BJ (cell line): ENCODE measurements at regions of chr11 and their contacts with region 1.

Region 1: DNA sequence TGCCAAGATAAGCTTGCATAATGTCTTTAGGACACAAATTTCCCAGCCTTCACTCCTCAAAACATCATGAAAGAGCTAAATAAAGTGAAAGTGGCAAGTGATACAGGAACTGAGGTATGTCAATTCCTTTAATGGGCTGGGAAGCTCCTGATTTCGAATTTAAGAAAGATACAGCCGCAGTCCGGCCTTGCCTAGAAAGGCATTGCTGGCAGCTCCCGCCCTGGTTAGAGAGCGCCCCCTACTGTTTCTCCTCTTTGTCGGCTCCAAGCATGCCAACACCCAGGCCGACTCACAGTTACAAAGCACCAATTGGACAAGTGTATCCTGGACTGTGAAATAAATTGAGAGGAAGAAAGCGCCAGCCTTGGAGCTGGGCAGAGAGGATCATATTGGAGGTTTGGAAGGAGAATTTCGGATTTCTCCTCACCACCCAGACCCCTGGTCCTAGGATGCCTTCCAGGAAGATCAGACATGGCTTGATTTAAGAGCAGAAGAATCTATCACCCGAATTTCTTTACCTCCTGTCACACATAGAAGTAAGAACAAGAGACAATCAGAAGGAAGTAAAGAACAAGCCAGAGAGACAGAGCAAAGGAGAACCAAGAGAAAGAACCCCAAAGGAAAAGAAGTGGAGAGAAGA is 84.0 kb downstream of the FAM76B start:
- DNase-seq: no peak
- H3K4me3 ChIP-seq: no peak overlapping the region
- H3K27me3 ChIP-seq: peaks cover 4% of the 10 kb centered on the region
- CTCF ChIP-seq: peak; percentile 96

Region 2: DNA sequence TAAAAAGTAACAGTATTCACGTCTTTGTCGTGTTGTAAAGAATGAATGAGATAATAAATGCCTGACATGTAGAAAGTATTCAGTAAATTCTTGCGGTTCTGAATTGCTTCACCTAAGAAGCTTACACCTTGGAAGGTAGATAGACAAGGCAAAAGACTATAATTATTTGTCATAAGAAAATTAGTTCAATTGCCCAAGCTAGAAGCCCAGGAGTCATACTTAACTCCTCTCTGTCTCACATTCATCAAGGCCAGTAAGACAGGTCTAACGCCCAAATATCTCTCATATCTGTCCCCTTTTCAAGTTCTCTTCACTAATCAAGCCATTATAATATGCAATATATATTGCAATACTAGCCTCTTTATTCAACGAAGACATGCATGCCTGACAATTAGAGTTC is 1025.2 kb before region 1 on chr11:
- CTCF ChIA-PET with region 1: no interaction called
- POLR2A ChIA-PET with region 1: interaction called, 17 read pairs
- DNase-seq: no peak
- H3K4me3 ChIP-seq: no peak overlapping the region
- H3K27me3 ChIP-seq: no peaks in the 10 kb centered on the region
- CTCF ChIP-seq: no peak

Region 3: DNA sequence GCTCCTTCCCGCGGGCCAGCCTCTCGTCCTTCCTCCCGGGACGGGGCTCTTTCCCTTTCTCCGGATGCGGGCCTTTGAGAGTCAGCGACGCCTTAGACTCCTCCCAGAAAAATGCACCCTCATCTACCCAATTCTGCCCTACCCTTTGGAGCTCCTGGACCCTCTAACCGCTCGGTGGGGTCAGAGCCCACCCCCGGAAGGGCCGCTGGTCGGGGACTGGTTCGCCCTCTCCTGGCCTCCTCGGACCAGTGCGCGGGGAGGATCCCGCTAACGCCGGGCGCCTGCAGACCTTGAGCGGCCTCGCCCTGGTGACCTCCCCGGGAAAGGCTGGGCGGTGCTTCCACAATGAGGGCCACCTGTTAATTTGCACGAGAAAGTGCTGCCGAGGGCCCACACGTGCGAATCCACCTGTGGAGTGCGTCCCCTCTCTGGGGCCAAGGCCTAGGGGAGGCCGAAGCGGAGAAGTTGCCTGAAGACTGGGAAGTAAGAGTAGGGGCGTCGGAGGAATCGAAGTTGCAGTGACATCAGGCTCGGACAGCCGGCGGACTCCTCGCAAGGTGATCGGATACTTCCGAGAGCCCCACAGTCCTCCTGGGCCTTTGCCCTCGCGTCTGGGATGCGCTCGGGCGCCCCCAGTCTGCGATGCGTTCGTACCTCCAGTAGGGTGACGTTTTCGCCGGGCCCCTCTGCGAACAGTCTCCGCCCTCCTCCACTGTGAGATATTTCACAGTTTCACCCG is 554.5 kb before region 1 on chr11:
- CTCF ChIA-PET with region 1: interaction called, 187 read pairs
- POLR2A ChIA-PET with region 1: no interaction called
- DNase-seq: no peak
- H3K4me3 ChIP-seq: peak overlapping the region; percentile 48
- H3K27me3 ChIP-seq: no peaks in the 10 kb centered on the region; the same call in 1 of the 2 replicates
- CTCF ChIP-seq: peak; percentile 81

Region 4: GRCh38 chr11:95371153-95371552 is 334.5 kb before region 1 on chr11:
- CTCF ChIA-PET with region 1: no interaction called
- POLR2A ChIA-PET with region 1: no interaction called
- DNase-seq: no peak
- H3K4me3 ChIP-seq: no peak overlapping the region
- H3K27me3 ChIP-seq: no peaks in the 10 kb centered on the region; the same call in 1 of the 2 replicates
- CTCF ChIP-seq: no peak

Region 5: GRCh38 chr11:95692526-95693260 is 12.9 kb before region 1 on chr11:
- CTCF ChIA-PET with region 1: interaction called, 16 read pairs
- POLR2A ChIA-PET with region 1: no interaction called
- DNase-seq: no peak
- H3K4me3 ChIP-seq: no peak overlapping the region
- H3K27me3 ChIP-seq: no peaks in the 10 kb centered on the region; the same call in 1 of the 2 replicates
- CTCF ChIP-seq: no peak

Region 6: GRCh38 chr11:95720195-95720594 is 14.6 kb after region 1 on chr11:
- CTCF ChIA-PET with region 1: interaction called, 16 read pairs
- POLR2A ChIA-PET with region 1: no interaction called
- DNase-seq: no peak
- H3K4me3 ChIP-seq: no peak overlapping the region
- H3K27me3 ChIP-seq: no peaks in the 10 kb centered on the region
- CTCF ChIP-seq: no peak

Region 7: DNA sequence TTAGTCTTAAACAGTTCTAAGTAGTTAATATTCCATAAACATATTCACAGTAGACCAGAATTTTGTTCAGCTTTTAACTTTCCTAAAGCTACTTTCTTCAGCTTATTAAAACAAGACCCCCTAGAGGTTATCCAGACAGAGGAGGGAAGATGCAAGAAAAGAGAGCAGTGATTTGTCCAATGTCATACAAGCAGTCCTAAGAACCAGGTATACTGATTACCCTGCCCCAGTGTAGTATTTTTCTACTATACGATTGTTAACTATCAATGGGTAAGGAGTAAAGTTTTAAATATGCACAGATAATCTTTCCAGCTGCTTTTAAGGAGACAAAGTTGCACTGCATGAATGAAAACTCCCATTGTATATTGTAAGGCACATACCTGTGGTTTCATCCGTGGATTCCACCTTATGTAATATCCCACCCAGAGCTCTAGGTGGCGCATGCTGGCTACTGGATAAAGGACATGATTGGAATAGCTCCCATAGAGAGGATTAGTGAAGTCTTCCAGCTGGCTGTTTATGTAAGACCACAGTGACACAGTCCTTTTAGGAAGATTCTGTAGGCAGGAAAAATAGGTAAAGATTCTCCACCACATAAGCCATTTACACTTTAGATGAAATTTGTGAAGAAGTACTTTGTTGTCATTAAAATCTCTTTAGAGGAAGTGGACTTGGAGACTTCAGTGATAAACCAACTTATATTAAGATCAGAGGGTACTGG is 130.3 kb after region 1 on chr11:
- CTCF ChIA-PET with region 1: no interaction called
- POLR2A ChIA-PET with region 1: no interaction called
- DNase-seq: peak; percentile 54
- H3K4me3 ChIP-seq: no peak overlapping the region
- H3K27me3 ChIP-seq: no peaks in the 10 kb centered on the region
- CTCF ChIP-seq: peak; percentile 86